ENCODE measurements at regions of chr6 and their contacts with region 1.

Region 1: DNA sequence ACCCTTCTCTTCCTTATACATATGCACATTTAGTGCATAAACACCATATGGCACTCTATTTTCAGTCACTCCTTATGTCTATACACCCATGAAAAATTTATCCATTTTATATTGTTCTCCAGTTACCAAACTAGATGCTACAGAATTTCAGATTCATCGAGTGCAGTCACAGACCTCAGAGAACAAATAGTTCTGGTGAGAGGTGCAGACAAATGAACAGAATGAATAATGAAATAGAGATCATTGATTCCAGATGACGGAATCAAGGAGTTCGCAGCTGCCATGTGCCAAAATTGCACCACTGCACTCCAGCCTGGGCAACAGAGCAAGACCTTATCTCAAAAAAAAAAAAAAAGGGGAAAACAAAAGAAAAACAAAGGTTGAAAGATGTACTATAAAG is 214.8 kb upstream of the CEP162 start:
- DNase-seq: no peak
- ATAC-seq: no peak
- H3K4me3 Mint-ChIP-seq: no peak overlapping the region
- H3K27ac Mint-ChIP-seq: no peak overlapping the region
- H3K4me1 Mint-ChIP-seq: 0 out of 2 replicates have a peak, but pooled peaks cover 2% of the 10 kb centered on the region
- H3K27me3 Mint-ChIP-seq: no peaks in the 10 kb centered on the region
- CTCF ChIP-seq: no peak

Region 2: DNA sequence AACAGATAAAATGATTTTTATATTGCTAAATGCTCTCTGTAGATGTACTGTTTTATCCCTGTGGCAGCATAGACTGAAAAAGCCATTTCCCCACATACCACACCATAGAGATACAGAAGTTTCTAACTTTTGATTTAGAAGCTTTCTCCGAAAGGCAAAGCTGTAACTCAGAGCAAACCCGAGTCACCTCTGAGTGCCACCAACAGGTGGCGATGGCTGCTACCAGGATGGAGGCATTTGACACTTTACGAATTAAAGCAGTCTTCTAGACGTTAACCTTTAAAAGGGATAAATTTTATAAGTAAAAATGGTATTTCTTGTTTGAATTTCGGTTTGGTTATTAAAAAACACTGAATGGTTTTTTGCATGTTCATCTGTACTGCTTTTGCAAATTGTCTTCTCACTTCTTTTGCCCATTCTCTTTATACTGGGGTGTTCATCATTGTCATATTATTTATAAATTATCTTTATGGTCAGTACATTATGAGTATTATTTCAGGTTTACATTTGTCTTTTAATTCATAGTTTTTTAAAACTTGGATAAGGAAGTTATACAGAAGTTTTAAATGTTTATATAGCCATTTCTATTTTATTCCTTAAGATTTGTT is 13.8 kb before region 1 on chr6:
- CTCF ChIA-PET with region 1: interaction called, 10 read pairs
- POLR2A ChIA-PET with region 1: no interaction called
- DNase-seq: peak; percentile 70
- ATAC-seq: peak; percentile 80
- H3K4me3 Mint-ChIP-seq: no peak overlapping the region
- H3K27ac Mint-ChIP-seq: no peak overlapping the region
- H3K4me1 Mint-ChIP-seq: peaks cover 25% of the 10 kb centered on the region
- H3K27me3 Mint-ChIP-seq: no peaks in the 10 kb centered on the region
- CTCF ChIP-seq: peak; percentile 51; the same call in 1 of the 2 replicates

Measured in WTC11 (cell line).